Breast epithelium (tissue), 4 donors: ENCODE measurements at regions of chr1 and their contacts with region 1.

Region 1: DNA sequence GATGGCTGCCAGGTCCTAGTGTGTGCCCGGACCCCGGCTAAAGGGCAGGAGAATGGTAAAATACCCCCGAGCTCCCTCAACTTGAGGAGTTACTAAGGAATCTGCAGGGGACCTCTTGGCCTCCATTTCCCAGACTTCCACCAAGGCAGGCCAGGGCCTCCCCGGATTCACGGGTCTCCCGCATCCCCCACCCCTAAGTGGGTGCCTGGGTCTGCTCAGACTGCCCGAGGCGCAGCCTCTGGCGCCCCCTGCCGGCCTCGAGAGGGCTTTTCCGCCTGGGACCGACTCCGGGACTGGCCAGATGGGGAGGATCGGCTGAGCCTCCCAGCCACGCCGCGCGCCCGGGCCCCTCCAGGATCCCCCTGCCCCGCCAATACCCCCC is 1.7 kb downstream of the PLEKHG5 start:
- DNase-seq: no peak
- H3K4me3 ChIP-seq: peak overlapping the region; percentile 40 to 75 (median 71)
- H3K27ac ChIP-seq: peak overlapping the region in 1 of 2 donors; percentile 86
- H3K4me1 ChIP-seq: peaks cover 0 to 12% of the 10 kb centered on the region in 2 donors
- H3K27me3 ChIP-seq: no peaks in the 10 kb centered on the region
- CTCF ChIP-seq: peak; percentile 71 to 81 (median 78)
- POLR2A ChIP-seq: no peak

Region 2: GRCh38 chr1:6538956-6539355 is 49.2 kb after region 1 on chr1:
- intact Hi-C with region 1: loop called (anchors 10 kb)
- DNase-seq: no peak
- H3K4me3 ChIP-seq: no peak overlapping the region
- H3K27ac ChIP-seq: no peak overlapping the region
- H3K4me1 ChIP-seq: no peaks in the 10 kb centered on the region
- H3K27me3 ChIP-seq: no peaks in the 10 kb centered on the region
- CTCF ChIP-seq: no peak
- POLR2A ChIP-seq: no peak

Region 3: GRCh38 chr1:6646499-6647148 is 156.8 kb after region 1 on chr1:
- intact Hi-C with region 1: loop called (anchors 10 kb)
- DNase-seq: no peak
- H3K4me3 ChIP-seq: no peak overlapping the region
- H3K27ac ChIP-seq: no peak overlapping the region
- H3K4me1 ChIP-seq: no peaks in the 10 kb centered on the region
- H3K27me3 ChIP-seq: no peaks in the 10 kb centered on the region
- CTCF ChIP-seq: peak; percentile 53 to 68 (median 66)
- POLR2A ChIP-seq: no peak

Region 4: DNA sequence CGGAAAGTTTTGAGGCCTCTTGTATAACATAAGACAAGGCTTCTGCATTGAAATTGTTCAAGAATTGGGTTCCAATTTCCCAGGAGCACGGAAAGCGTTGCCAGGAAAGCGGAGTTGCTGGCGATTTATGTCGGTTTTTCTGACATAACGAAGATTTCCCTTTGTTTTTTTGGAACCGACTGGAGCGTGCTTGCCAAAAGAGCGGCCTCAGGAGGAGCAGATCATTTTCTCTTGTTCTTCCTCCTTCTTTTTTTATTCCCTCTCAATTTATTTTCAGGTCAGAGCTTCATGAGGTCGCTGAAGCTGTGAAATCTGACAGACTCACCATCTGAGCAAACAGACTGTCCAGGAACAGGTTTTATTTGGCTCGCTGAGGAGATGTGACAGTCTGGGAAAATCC is 571.0 kb after region 1 on chr1:
- intact Hi-C with region 1: no loop called
- DNase-seq: no peak
- H3K4me3 ChIP-seq: no peak overlapping the region
- H3K27ac ChIP-seq: no peak overlapping the region
- H3K4me1 ChIP-seq: no peaks in the 10 kb centered on the region
- H3K27me3 ChIP-seq: no peaks in the 10 kb centered on the region
- CTCF ChIP-seq: no peak
- POLR2A ChIP-seq: no peak